B cell (primary cell): ENCODE measurements at regions of chr4 and their contacts with region 1.

Region 1: DNA sequence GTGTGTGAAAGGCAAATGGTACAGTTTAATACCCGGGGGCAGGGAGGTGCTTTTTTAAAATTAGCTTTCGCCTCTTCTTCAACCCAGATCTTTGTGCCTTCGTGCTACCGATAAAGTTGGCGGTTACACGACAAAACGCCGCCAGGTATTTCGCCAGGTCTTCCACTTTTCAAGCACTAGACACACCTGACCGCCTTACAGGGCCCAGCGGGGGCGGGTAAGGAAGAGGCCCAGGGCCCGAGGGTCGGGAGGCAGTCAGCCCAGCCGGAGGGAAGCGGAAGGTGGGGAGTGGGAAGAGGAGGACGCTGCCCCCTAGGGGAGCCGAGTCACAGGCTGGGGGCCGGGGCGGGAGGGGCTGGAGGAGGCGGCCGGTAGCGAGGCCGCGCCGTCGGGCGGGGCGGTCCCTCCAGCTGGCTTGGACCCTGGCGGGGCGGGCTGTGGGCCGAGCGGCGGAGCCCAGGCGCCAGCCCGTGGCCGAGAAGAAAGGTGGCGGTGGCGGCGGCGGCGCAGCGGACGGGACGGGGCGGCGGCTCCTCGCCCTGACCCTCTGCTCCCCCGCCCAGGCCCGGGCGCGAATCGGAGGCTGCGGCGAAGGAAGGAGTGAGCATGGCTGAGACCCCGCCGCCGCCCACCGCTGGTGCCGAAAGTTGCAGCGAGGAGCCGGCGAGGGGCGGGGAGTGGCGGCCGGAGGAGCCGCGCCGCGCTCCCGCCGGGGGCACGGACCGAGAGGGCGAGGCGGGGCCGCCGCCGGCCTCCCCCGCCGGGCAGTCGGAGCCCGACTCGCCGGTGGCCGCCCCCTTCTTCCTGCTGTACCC is 16.2 kb downstream of the UTP3 start:
- DNase-seq: peak; percentile 85
- ATAC-seq: peak; percentile 70
- H3K4me3 ChIP-seq: peak overlapping the region; percentile 2 to 88 (median 82)
- H3K4me3 Mint-ChIP-seq: peak overlapping the region; percentile 91
- H3K27ac ChIP-seq: peak overlapping the region; percentile 62 to 80
- H3K27ac Mint-ChIP-seq: peak overlapping the region; percentile 98
- H3K4me1 ChIP-seq: peaks cover 17 to 25% of the 10 kb centered on the region in 2 donors
- H3K4me1 Mint-ChIP-seq: peaks cover 25% of the 10 kb centered on the region
- H3K27me3 ChIP-seq: no peaks in the 10 kb centered on the region
- H3K27me3 Mint-ChIP-seq: no peaks in the 10 kb centered on the region
- CTCF ChIP-seq: peak; percentile 12

Region 2: DNA sequence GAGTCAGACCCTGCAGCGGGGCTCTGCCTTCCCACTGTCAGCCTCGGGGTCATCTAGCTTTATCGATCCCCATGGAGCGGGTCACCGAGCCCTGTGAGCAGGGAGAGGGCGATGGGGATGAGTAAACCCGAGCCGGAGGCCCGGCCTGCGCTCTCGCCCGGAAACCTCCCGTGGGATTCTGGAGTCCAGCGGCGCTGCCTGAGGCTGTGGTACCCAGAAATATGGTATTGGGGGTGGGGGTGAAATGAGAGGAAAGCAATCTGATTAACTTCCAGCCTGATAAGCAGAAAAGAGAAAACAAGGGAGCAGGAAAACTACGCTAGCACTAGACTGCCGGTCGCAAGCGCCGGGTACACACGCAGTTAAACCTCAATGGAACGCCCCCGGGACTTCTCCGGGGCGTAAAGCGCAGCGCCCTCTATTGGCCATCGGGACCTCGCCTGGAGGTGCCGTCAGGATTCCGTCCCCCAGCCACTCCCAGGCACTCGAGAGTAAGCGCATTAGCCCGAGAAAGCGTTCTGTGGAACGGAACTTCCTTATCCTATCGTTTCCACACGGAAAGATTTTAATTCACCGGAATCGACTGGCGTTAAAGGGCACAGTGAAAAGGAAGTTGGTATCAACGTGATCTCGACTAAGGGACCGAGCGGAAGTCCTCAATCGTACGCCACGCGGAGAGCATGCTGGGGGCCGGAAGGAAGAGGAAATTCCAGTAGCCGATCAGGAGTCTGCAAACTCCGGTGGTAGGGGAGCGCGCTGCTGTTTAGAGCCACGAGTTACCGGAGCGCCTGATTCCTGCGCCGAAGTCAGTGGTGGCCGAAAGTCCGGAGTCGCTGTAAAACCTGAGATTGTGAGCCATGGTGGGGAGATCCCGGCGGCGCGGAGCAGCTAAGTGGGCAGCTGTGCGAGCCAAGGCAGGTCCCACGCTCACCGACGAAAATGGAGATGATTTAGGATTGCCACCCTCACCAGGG is 16.4 kb before region 1 on chr4 and contains the start of gene UTP3:
- CTCF ChIA-PET with region 1: interaction called, 59 read pairs
- POLR2A ChIA-PET with region 1: interaction called, 13 read pairs
- intact Hi-C with region 1: loop called (anchors 1 kb)
- DNase-seq: peak; percentile 96
- ATAC-seq: peak; percentile 90
- H3K4me3 ChIP-seq: peak within 1 kb of the TSS; percentile 66 to 97 (median 92)
- H3K4me3 Mint-ChIP-seq: peak within 1 kb of the TSS; percentile 100
- H3K27ac ChIP-seq: peak within 1 kb of the TSS; percentile 96 to 98
- H3K27ac Mint-ChIP-seq: peak within 1 kb of the TSS; percentile 100
- H3K4me1 ChIP-seq: peaks cover 24 to 32% of the 10 kb centered on the region in 2 donors
- H3K4me1 Mint-ChIP-seq: peaks cover 37% of the 10 kb centered on the region
- H3K27me3 ChIP-seq: no peaks in the 10 kb centered on the region
- H3K27me3 Mint-ChIP-seq: no peaks in the 10 kb centered on the region
- CTCF ChIP-seq: peak; percentile 98
- total RNA-seq, gene UTP3: 42.0 and 42.2 TPM in 2 replicates

Region 3: GRCh38 chr4:70743731-70744130 is 39.2 kb after region 1 on chr4:
- CTCF ChIA-PET with region 1: no interaction called
- POLR2A ChIA-PET with region 1: no interaction called
- intact Hi-C with region 1: no loop called
- DNase-seq: no peak
- ATAC-seq: no peak
- H3K4me3 ChIP-seq: no peak overlapping the region
- H3K4me3 Mint-ChIP-seq: no peak overlapping the region
- H3K27ac ChIP-seq: no peak overlapping the region
- H3K27ac Mint-ChIP-seq: no peak overlapping the region
- H3K4me1 ChIP-seq: no peaks in the 10 kb centered on the region
- H3K4me1 Mint-ChIP-seq: peaks cover 2% of the 10 kb centered on the region
- H3K27me3 ChIP-seq: no peaks in the 10 kb centered on the region
- H3K27me3 Mint-ChIP-seq: no peaks in the 10 kb centered on the region
- CTCF ChIP-seq: no peak

Region 4: DNA sequence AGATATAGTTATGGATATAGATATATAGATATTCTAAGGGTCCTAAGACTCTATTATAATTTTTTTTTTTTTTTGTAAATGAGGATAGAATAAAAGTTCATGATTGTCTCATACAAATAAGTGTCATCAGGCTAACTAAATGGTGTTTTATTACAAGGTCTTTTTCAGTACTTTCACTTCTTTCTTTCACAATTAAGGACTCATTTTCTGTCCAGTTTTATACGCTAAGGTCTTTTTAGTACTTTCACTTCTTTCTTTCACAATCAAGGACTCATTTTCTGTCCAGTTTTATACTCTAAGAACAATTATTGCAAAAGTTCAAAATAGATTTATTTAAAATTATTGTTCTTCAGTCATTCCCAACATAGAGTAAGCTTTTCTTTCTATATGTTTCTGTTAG is 49.9 kb after region 1 on chr4:
- CTCF ChIA-PET with region 1: interaction called, 8 read pairs
- POLR2A ChIA-PET with region 1: interaction called, 8 read pairs
- intact Hi-C with region 1: loop called (anchors 5 kb)
- DNase-seq: peak; percentile 65
- ATAC-seq: peak; percentile 66
- H3K4me3 ChIP-seq: peak overlapping the region in 3 of 5 experiments; percentile 15 to 57 (median 43)
- H3K4me3 Mint-ChIP-seq: peak overlapping the region; percentile 67
- H3K27ac ChIP-seq: peak overlapping the region in 1 of 2 donors; percentile 69
- H3K27ac Mint-ChIP-seq: peak overlapping the region; percentile 33
- H3K4me1 ChIP-seq: peaks cover 30 to 36% of the 10 kb centered on the region in 2 donors
- H3K4me1 Mint-ChIP-seq: peaks cover 50% of the 10 kb centered on the region
- H3K27me3 ChIP-seq: no peaks in the 10 kb centered on the region
- H3K27me3 Mint-ChIP-seq: no peaks in the 10 kb centered on the region
- CTCF ChIP-seq: no peak

Region 5: GRCh38 chr4:70863099-70863790 is 158.7 kb after region 1 on chr4:
- CTCF ChIA-PET with region 1: no interaction called
- POLR2A ChIA-PET with region 1: no interaction called
- intact Hi-C with region 1: no loop called
- DNase-seq: no peak
- ATAC-seq: no peak
- H3K4me3 ChIP-seq: no peak overlapping the region
- H3K4me3 Mint-ChIP-seq: no peak overlapping the region
- H3K27ac ChIP-seq: no peak overlapping the region
- H3K27ac Mint-ChIP-seq: peak overlapping the region; percentile 32
- H3K4me1 ChIP-seq: peaks cover 0 to 4% of the 10 kb centered on the region in 2 donors
- H3K4me1 Mint-ChIP-seq: peaks cover 5% of the 10 kb centered on the region
- H3K27me3 ChIP-seq: no peaks in the 10 kb centered on the region
- H3K27me3 Mint-ChIP-seq: no peaks in the 10 kb centered on the region
- CTCF ChIP-seq: no peak

Region 6: DNA sequence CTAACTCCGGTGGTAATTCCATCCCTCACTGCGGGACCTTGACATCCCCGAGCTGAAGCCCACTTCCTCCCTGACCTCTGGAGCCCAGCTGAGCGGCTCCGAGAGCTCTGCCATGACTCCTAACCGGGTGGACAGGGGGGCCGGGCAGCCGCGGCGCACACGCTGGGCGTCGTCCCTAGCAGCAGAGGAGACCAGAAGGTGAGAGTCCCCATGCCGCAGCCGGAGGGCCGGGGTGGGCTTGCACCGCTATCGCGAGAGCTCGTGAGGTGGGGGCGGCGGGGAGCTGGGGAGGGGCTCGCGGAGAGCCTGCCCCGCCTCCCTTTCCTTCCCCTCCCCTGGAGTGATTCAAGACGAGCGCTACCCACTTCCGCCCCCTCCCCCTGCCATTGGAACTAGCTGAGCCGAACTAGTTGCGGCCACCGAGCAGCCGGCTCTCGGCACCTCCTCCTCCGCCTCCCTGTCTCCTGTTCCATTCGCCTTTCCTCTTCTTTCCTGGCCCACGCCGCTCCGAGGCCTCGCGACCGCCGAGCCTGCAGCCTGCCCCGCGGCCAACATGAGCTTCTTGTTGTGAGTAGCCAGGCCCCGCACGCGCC is 197.5 kb after region 1 on chr4 and contains the start of gene MOB1B:
- CTCF ChIA-PET with region 1: interaction called, 5 read pairs
- POLR2A ChIA-PET with region 1: interaction called, 3 read pairs
- intact Hi-C with region 1: loop called (anchors 1 kb)
- DNase-seq: peak; percentile 85
- ATAC-seq: peak; percentile 95
- H3K4me3 ChIP-seq: peak within 1 kb of the TSS; percentile 72 to 98 (median 77)
- H3K4me3 Mint-ChIP-seq: peak within 1 kb of the TSS; percentile 99
- H3K27ac ChIP-seq: peak within 1 kb of the TSS; percentile 41 to 76
- H3K27ac Mint-ChIP-seq: peak within 1 kb of the TSS; percentile 89
- H3K4me1 ChIP-seq: peaks cover 13% of the 10 kb centered on the region in 2 donors
- H3K4me1 Mint-ChIP-seq: peaks cover 29% of the 10 kb centered on the region
- H3K27me3 ChIP-seq: no peaks in the 10 kb centered on the region
- H3K27me3 Mint-ChIP-seq: no peaks in the 10 kb centered on the region
- CTCF ChIP-seq: peak; percentile 61
- total RNA-seq, gene MOB1B: 30.4 and 32.4 TPM in 2 replicates

Region 7: GRCh38 chr4:70927502-70928137 is 223.1 kb after region 1 on chr4:
- CTCF ChIA-PET with region 1: interaction called, 5 read pairs
- POLR2A ChIA-PET with region 1: no interaction called
- intact Hi-C with region 1: loop called (anchors 1 kb)
- DNase-seq: peak; percentile 72
- ATAC-seq: peak; percentile 61
- H3K4me3 ChIP-seq: peak overlapping the region in 1 of 5 experiments; percentile 13
- H3K4me3 Mint-ChIP-seq: peak overlapping the region; percentile 61
- H3K27ac ChIP-seq: peak overlapping the region; percentile 55 to 67
- H3K27ac Mint-ChIP-seq: peak overlapping the region; percentile 72
- H3K4me1 ChIP-seq: peaks cover 40 to 47% of the 10 kb centered on the region in 2 donors
- H3K4me1 Mint-ChIP-seq: peaks cover 52% of the 10 kb centered on the region
- H3K27me3 ChIP-seq: no peaks in the 10 kb centered on the region
- H3K27me3 Mint-ChIP-seq: no peaks in the 10 kb centered on the region
- CTCF ChIP-seq: peak; percentile 19